CD8-positive, alpha-beta T cell (primary cell): ENCODE measurements at regions of chr15 and their contacts with region 1.

Region 1: DNA sequence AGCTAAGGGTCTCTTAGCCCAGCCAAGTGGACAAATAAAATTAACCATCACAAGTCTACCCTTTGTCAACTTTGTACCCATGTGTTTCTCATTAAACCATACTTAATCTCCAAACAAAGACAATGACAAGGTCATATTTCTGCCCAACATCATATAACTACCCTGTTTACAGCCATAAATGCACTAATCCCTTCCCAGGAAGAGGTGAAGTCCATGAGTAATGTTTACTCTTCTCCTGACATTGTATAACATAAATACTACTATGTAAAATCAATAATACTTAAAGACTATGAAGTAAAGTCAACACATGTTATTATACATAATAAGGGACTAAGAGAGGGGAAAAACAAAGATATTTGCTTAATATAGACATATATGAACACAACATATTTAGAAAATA is 38.5 kb upstream of the FAN1 start:
- DNase-seq: no peak
- ATAC-seq: no peak
- H3K4me3 ChIP-seq: no peak overlapping the region
- H3K4me3 Mint-ChIP-seq: no peak overlapping the region
- H3K27ac ChIP-seq: no peak overlapping the region
- H3K27ac Mint-ChIP-seq: no peak overlapping the region
- H3K4me1 ChIP-seq: no peaks in the 10 kb centered on the region
- H3K4me1 Mint-ChIP-seq: no peaks in the 10 kb centered on the region
- H3K27me3 ChIP-seq: no peaks in the 10 kb centered on the region
- H3K27me3 Mint-ChIP-seq: no peaks in the 10 kb centered on the region
- CTCF ChIP-seq: no peak

Region 2: DNA sequence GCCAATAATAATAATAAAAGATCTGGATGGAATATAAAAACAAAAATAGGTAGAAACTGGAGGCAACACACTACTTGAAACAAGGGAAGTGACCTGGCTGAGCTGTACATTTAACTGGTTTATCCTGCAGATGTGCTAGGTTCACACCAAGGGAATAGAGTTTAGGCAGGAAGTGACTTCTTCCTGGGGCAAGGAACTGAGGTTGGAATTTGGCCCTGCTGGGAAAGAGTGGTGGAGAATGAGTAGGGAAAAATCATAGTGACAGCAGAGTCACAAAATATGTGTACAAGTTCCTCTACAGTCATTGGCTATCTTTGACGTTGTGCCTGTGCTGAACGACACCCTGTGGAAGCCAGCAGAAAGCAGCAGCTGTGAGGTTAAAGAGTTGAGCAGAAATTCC is 195.2 kb before region 1 on chr15:
- CTCF ChIA-PET with region 1: no interaction called
- POLR2A ChIA-PET with region 1: no interaction called
- intact Hi-C with region 1: loop called in 1 of 2 experiments (anchors 10 kb)
- DNase-seq: no peak
- ATAC-seq: no peak
- H3K4me3 ChIP-seq: no peak overlapping the region
- H3K4me3 Mint-ChIP-seq: no peak overlapping the region
- H3K27ac ChIP-seq: no peak overlapping the region
- H3K27ac Mint-ChIP-seq: no peak overlapping the region
- H3K4me1 ChIP-seq: no peaks in the 10 kb centered on the region
- H3K4me1 Mint-ChIP-seq: no peaks in the 10 kb centered on the region
- H3K27me3 ChIP-seq: no peaks in the 10 kb centered on the region
- H3K27me3 Mint-ChIP-seq: no peaks in the 10 kb centered on the region
- CTCF ChIP-seq: no peak

Region 3: DNA sequence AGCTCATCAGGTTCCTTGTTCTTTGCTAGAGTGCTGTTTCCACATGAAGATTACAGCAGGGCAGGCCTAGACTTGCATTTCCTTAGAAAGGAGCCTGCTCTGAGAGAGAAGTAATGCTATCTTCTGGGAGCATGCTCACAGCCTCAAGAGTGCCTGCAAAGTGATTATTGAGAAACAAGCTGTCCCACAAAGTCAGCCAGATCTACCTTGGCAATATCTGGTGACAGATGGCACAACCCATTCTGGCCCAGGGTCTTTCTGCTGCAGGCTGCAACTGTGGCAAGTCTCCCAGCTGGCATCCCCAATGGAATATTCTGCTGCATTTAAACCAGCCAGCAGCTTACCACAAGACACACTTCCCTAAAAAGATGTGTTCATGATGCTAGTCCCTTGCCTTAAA is 96.8 kb after region 1 on chr15:
- CTCF ChIA-PET with region 1: no interaction called
- POLR2A ChIA-PET with region 1: no interaction called
- intact Hi-C with region 1: no loop called
- DNase-seq: no peak
- ATAC-seq: no peak
- H3K4me3 ChIP-seq: no peak overlapping the region
- H3K4me3 Mint-ChIP-seq: no peak overlapping the region
- H3K27ac ChIP-seq: no peak overlapping the region
- H3K27ac Mint-ChIP-seq: no peak overlapping the region
- H3K4me1 ChIP-seq: peaks cover 10% of the 10 kb centered on the region
- H3K4me1 Mint-ChIP-seq: peaks cover 25% of the 10 kb centered on the region
- H3K27me3 ChIP-seq: no peaks in the 10 kb centered on the region
- H3K27me3 Mint-ChIP-seq: no peaks in the 10 kb centered on the region
- CTCF ChIP-seq: no peak